Activated T-helper 1 cell treated with anti-CD3 and anti-CD28 coated beads, Interleukin-12 subunit alpha, Interleukin-12 subunit beta, Interleukin-2, Interleukin-4 antibody, amounts not matched to agents 30 ng/mL and 10 ng/mL and 1 ng/mL, durations not matched to agents 14 hours and 24 hours and 36 hours (primary cell): ENCODE measurements at regions of chr7 and their contacts with region 1.

Region 1: DNA sequence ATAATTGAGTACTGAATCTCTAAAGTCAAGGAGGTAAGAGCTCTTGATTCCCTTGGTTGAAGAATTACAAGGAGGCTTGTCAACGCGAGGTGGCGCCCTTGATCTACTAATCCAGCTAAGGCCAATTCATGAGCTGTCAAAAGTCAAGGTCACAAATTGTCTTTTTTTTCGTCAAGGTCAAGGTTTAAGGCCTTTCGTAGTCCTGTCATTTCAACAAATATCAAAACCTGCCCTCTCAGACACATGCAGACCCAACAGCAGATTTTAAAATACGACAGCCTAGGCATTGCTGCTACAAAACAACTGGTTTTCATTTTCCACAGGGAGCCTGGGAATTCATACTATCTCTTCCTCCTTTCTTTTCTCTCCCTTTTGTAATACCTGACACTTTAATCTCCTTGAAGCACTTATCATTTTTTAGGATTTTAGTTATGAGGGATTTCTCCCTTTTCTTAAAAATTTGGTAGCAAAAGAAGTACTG is 3.6 kb downstream of the HOXA13 start:
- DNase-seq: peak; percentile 59
- H3K4me3 Mint-ChIP-seq: no peak overlapping the region
- H3K27ac Mint-ChIP-seq: no peak overlapping the region
- H3K4me1 Mint-ChIP-seq: no peaks in the 10 kb centered on the region
- H3K27me3 Mint-ChIP-seq: peaks cover 80% of the 10 kb centered on the region

Region 2: GRCh38 chr7:25851332-25852210 is 1344.8 kb before region 1 on chr7:
- intact Hi-C with region 1: loop called (anchors 10 kb)
- DNase-seq: peak; percentile 64
- H3K4me3 Mint-ChIP-seq: peak overlapping the region; percentile 77
- H3K27ac Mint-ChIP-seq: peak overlapping the region; percentile 83
- H3K4me1 Mint-ChIP-seq: peaks cover 17% of the 10 kb centered on the region
- H3K27me3 Mint-ChIP-seq: peaks cover 35% of the 10 kb centered on the region

Region 3: GRCh38 chr7:26813432-26813831 is 382.9 kb before region 1 on chr7:
- intact Hi-C with region 1: no loop called
- DNase-seq: no peak
- H3K4me3 Mint-ChIP-seq: no peak overlapping the region
- H3K27ac Mint-ChIP-seq: no peak overlapping the region
- H3K4me1 Mint-ChIP-seq: no peaks in the 10 kb centered on the region
- H3K27me3 Mint-ChIP-seq: peaks cover 2% of the 10 kb centered on the region

Region 4: GRCh38 chr7:27184337-27185012 is 11.9 kb before region 1 on chr7:
- intact Hi-C with region 1: loop called (anchors 2 kb)
- DNase-seq: no peak
- H3K4me3 Mint-ChIP-seq: no peak overlapping the region
- H3K27ac Mint-ChIP-seq: peak overlapping the region; percentile 87
- H3K4me1 Mint-ChIP-seq: peaks cover 5% of the 10 kb centered on the region
- H3K27me3 Mint-ChIP-seq: peaks cover 81% of the 10 kb centered on the region

Region 5: GRCh38 chr7:27576360-27576944 is 380.1 kb after region 1 on chr7:
- intact Hi-C with region 1: loop called (anchors 1 kb)
- DNase-seq: no peak
- H3K4me3 Mint-ChIP-seq: no peak overlapping the region
- H3K27ac Mint-ChIP-seq: no peak overlapping the region
- H3K4me1 Mint-ChIP-seq: no peaks in the 10 kb centered on the region
- H3K27me3 Mint-ChIP-seq: peaks cover 5% of the 10 kb centered on the region

Region 6: GRCh38 chr7:28020302-28020940 is 824.1 kb after region 1 on chr7:
- intact Hi-C with region 1: loop called (anchors 1 kb)
- DNase-seq: peak; percentile 26
- H3K4me3 Mint-ChIP-seq: no peak overlapping the region
- H3K27ac Mint-ChIP-seq: no peak overlapping the region
- H3K4me1 Mint-ChIP-seq: peaks cover 7% of the 10 kb centered on the region
- H3K27me3 Mint-ChIP-seq: peaks cover 7% of the 10 kb centered on the region

Region 7: DNA sequence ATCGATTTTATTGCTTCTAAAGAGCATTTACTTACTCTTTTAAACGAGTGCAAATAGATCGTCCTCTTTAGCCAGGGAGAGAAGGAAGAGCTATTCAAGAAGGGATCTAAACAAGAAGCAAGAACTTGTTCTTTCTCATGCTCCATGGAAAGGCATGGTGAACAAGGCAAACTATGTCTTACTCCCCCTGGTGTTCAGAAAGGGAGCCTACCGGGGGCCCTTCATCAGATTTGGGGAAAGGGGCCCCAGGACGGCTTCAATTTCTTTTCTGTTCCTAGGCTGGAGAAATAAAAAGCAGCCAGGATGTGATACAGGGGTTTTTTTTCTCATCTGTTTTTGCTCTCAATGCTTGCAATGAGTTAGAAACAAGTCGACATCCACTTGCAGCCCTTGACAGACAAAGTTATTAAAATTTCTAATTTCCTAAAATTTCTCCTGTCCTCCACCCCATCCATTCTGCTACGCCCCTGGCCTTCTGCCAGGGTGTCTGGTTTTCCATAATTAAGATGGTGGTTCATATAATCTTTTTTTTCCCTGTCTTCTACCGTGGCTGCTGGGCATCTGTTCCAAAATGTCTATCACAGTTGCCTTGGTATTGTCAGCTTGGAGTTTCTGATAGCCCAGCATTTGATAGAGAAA is 1430.4 kb after region 1 on chr7:
- intact Hi-C with region 1: loop called (anchors 2 kb)
- DNase-seq: no peak
- H3K4me3 Mint-ChIP-seq: no peak overlapping the region
- H3K27ac Mint-ChIP-seq: no peak overlapping the region
- H3K4me1 Mint-ChIP-seq: no peaks in the 10 kb centered on the region
- H3K27me3 Mint-ChIP-seq: peaks cover 6% of the 10 kb centered on the region